Activated T-helper 1 cell treated with anti-CD3 and anti-CD28 coated beads, Interleukin-12 subunit alpha, Interleukin-12 subunit beta, Interleukin-2, Interleukin-4 antibody, amounts not matched to agents 30 ng/mL and 10 ng/mL and 1 ng/mL, durations not matched to agents 14 hours and 24 hours and 36 hours (primary cell): ENCODE measurements at regions of chr2 and their contacts with region 1.

Region 1: DNA sequence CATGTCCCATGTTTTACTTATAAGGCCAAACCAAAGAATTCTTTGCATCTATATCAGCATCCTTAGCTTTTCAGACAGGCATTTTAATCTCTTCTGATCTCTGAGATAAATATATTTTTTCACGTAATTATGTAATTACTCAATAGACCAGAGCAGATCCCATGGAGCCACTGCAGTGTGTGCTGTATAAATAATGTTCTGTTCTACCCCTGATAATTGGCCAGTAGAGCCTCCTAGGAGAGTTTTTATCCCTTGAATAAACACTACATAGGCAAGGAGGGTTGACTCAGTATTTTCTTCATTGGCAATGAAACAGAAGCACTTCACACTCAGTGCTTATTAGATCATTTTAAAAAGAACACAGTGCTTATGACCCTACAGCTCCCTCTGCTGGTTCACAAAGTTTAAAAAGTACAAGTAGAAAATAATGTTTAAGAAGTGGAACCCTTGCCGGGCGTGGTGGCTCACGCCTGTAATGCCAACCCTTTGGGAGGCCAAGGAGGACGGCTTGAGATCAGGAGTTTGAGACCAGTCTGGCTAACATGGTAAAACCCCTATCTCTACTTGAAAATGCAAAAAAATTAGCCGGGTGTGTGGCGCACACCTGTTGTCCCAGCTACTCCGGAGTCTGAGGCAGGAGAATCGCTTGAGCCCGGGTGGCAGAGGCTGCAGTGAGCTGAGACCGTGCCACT is 91.9 kb downstream of the PPP1R1C start:
- DNase-seq: no peak
- H3K4me3 Mint-ChIP-seq: no peak overlapping the region
- H3K27ac Mint-ChIP-seq: no peak overlapping the region
- H3K4me1 Mint-ChIP-seq: no peaks in the 10 kb centered on the region
- H3K27me3 Mint-ChIP-seq: peaks cover 4% of the 10 kb centered on the region

Region 2: GRCh38 chr2:180125245-180125962 is 1952.2 kb before region 1 on chr2:
- intact Hi-C with region 1: loop called (anchors 5 kb)
- DNase-seq: peak; percentile 6
- H3K4me3 Mint-ChIP-seq: no peak overlapping the region
- H3K27ac Mint-ChIP-seq: no peak overlapping the region
- H3K4me1 Mint-ChIP-seq: no peaks in the 10 kb centered on the region
- H3K27me3 Mint-ChIP-seq: peaks cover 11% of the 10 kb centered on the region